Caco-2 (cell line): ENCODE measurements at regions of chr1 and their contacts with region 1.

Region 1: GRCh38 chr1:23800400-23801337 is at the start of gene GALE:
- DNase-seq: peak; percentile 91 to 94
- H3K4me3 ChIP-seq: peak within 1 kb of the TSS; percentile 96
- H3K4me3 Mint-ChIP-seq: peak within 1 kb of the TSS; percentile 91
- H3K27ac Mint-ChIP-seq: peak within 1 kb of the TSS; percentile 96
- H3K4me1 ChIP-seq: peaks cover 7% of the 10 kb centered on the region; the same call in 1 of the 2 replicates
- H3K4me1 Mint-ChIP-seq: no peaks in the 10 kb centered on the region
- H3K27me3 ChIP-seq: no peaks in the 10 kb centered on the region
- H3K27me3 Mint-ChIP-seq: no peaks in the 10 kb centered on the region
- CTCF ChIP-seq: no peak
- total RNA-seq, gene GALE: 51.6 and 57.1 TPM in 2 replicates

Region 2: GRCh38 chr1:23657659-23658275 is 142.9 kb before region 1 on chr1:
- CTCF ChIA-PET with region 1: no interaction called
- POLR2A ChIA-PET with region 1: no interaction called
- intact Hi-C with region 1: no loop called
- DNase-seq: peak; percentile 63 to 67
- H3K4me3 ChIP-seq: no peak overlapping the region
- H3K4me3 Mint-ChIP-seq: no peak overlapping the region
- H3K27ac Mint-ChIP-seq: no peak overlapping the region
- H3K4me1 ChIP-seq: no peaks in the 10 kb centered on the region
- H3K4me1 Mint-ChIP-seq: no peaks in the 10 kb centered on the region
- H3K27me3 ChIP-seq: no peaks in the 10 kb centered on the region
- H3K27me3 Mint-ChIP-seq: no peaks in the 10 kb centered on the region
- CTCF ChIP-seq: peak; percentile 67 to 88

Region 3: DNA sequence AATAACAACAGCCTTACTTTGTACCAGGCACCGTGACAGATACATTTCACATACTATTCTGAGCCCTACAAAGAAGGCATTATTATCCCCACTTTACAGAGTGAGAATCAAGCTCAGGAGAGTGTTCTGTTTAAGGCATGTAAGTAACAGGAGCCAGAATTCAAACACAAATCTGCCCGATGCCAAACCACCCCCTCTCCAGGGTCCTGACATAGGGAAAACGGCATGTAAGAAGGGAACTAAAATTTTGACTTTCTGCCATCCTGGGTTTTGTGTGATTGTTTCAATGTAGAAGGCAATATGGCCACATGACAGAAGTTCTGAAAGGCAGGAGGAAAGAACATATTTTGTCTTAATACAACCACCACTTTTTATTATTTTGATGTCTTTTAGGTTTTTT is 62.0 kb after region 1 on chr1:
- CTCF ChIA-PET with region 1: no interaction called
- POLR2A ChIA-PET with region 1: no interaction called
- intact Hi-C with region 1: no loop called
- DNase-seq: no peak
- H3K4me3 ChIP-seq: no peak overlapping the region
- H3K4me3 Mint-ChIP-seq: no peak overlapping the region
- H3K27ac Mint-ChIP-seq: no peak overlapping the region
- H3K4me1 ChIP-seq: 0 out of 2 replicates have a peak, but pooled peaks cover 3% of the 10 kb centered on the region
- H3K4me1 Mint-ChIP-seq: no peaks in the 10 kb centered on the region
- H3K27me3 ChIP-seq: no peaks in the 10 kb centered on the region
- H3K27me3 Mint-ChIP-seq: no peaks in the 10 kb centered on the region
- CTCF ChIP-seq: no peak

Region 4: GRCh38 chr1:24027838-24028468 is 227.3 kb after region 1 on chr1:
- CTCF ChIA-PET with region 1: no interaction called
- POLR2A ChIA-PET with region 1: no interaction called
- intact Hi-C with region 1: loop called (anchors 10 kb)
- DNase-seq: peak in 1 of 2 experiments; percentile 30
- H3K4me3 ChIP-seq: no peak overlapping the region
- H3K4me3 Mint-ChIP-seq: no peak overlapping the region
- H3K27ac Mint-ChIP-seq: no peak overlapping the region
- H3K4me1 ChIP-seq: peaks cover 7% of the 10 kb centered on the region
- H3K4me1 Mint-ChIP-seq: no peaks in the 10 kb centered on the region
- H3K27me3 ChIP-seq: no peaks in the 10 kb centered on the region
- H3K27me3 Mint-ChIP-seq: no peaks in the 10 kb centered on the region
- CTCF ChIP-seq: peak; percentile 32 to 55